ENCODE measurements at regions of chr21 and their contacts with region 1.

Region 1: DNA sequence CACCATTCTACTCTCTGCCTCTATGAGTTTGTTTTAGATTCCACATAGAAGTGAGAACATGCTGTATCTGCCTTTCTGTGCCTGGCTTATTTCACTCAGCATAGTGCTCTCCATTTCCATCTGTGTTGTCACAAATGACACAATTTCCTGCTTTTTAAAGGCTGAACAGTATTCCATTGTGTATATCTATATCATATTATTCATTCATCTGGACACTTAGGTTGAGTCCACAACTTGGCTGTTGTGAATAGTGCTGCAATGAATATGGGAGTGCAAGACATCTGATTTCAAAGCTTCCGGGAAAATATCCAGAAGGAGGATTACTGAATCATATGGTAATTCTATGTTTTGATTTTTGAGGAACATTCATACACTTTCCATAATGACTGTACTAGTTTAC is 20.1 kb upstream of the DONSON start:
- DNase-seq: no peak
- H3K4me3 ChIP-seq: no peak overlapping the region
- H3K27ac ChIP-seq: no peak overlapping the region
- H3K4me1 ChIP-seq: no peaks in the 10 kb centered on the region
- H3K27me3 ChIP-seq: no peaks in the 10 kb centered on the region
- CTCF ChIP-seq: no peak
- EP300 ChIP-seq: no peak
- RAD21 ChIP-seq: no peak

Region 2: GRCh38 chr21:33572350-33572749 is 36.2 kb before region 1 on chr21:
- CTCF ChIA-PET with region 1: interaction called, 17 read pairs
- POLR2A ChIA-PET with region 1: no interaction called
- DNase-seq: no peak
- H3K4me3 ChIP-seq: no peak overlapping the region
- H3K27ac ChIP-seq: no peak overlapping the region
- H3K4me1 ChIP-seq: no peaks in the 10 kb centered on the region; a peak in 1 of 4 replicates
- H3K27me3 ChIP-seq: no peaks in the 10 kb centered on the region
- CTCF ChIP-seq: no peak
- EP300 ChIP-seq: no peak
- RAD21 ChIP-seq: no peak

Region 3: GRCh38 chr21:33578959-33579542 is 29.5 kb before region 1 on chr21:
- CTCF ChIA-PET with region 1: interaction called, 11 read pairs
- POLR2A ChIA-PET with region 1: no interaction called
- DNase-seq: no peak
- H3K4me3 ChIP-seq: no peak overlapping the region
- H3K27ac ChIP-seq: peak overlapping the region; percentile 18 to 50; a peak in 3 of 4 replicates
- H3K4me1 ChIP-seq: peaks cover 0 to 6% of the 10 kb centered on the region in 2 experiments; a peak in 1 of 4 replicates
- H3K27me3 ChIP-seq: no peaks in the 10 kb centered on the region
- CTCF ChIP-seq: no peak
- EP300 ChIP-seq: no peak
- RAD21 ChIP-seq: no peak

Region 4: GRCh38 chr21:33588485-33589335 is 19.8 kb before region 1 on chr21 and contains the start of gene DONSON:
- CTCF ChIA-PET with region 1: interaction called, 50 read pairs
- POLR2A ChIA-PET with region 1: interaction called, 5 read pairs
- DNase-seq: peak; percentile 99
- H3K4me3 ChIP-seq: peak within 1 kb of the TSS; percentile 84 to 88
- H3K27ac ChIP-seq: peak within 1 kb of the TSS; percentile 83 to 96
- H3K4me1 ChIP-seq: peaks cover 6% of the 10 kb centered on the region in 2 experiments; a peak in 3 of 4 replicates
- H3K27me3 ChIP-seq: no peaks in the 10 kb centered on the region
- CTCF ChIP-seq: no peak
- EP300 ChIP-seq: 0 out of 4 replicates have a peak, but pooled peaks of 1 of the 2 experiments have one; percentile 5
- RAD21 ChIP-seq: no peak
- polyA plus RNA-seq, gene DONSON: 17.3 and 20.6 TPM in 2 replicates

Region 5: GRCh38 chr21:33598051-33598450 is 10.5 kb before region 1 on chr21:
- CTCF ChIA-PET with region 1: interaction called, 15 read pairs
- POLR2A ChIA-PET with region 1: interaction called, 6 read pairs
- DNase-seq: no peak
- H3K4me3 ChIP-seq: no peak overlapping the region
- H3K27ac ChIP-seq: no peak overlapping the region
- H3K4me1 ChIP-seq: no peaks in the 10 kb centered on the region
- H3K27me3 ChIP-seq: no peaks in the 10 kb centered on the region
- CTCF ChIP-seq: no peak
- EP300 ChIP-seq: no peak
- RAD21 ChIP-seq: no peak

Region 6: GRCh38 chr21:33619726-33620125 is 11.2 kb after region 1 on chr21:
- CTCF ChIA-PET with region 1: interaction called, 21 read pairs
- POLR2A ChIA-PET with region 1: no interaction called
- DNase-seq: no peak
- H3K4me3 ChIP-seq: no peak overlapping the region
- H3K27ac ChIP-seq: no peak overlapping the region
- H3K4me1 ChIP-seq: no peaks in the 10 kb centered on the region
- H3K27me3 ChIP-seq: no peaks in the 10 kb centered on the region
- CTCF ChIP-seq: no peak
- EP300 ChIP-seq: no peak
- RAD21 ChIP-seq: no peak

Region 7: GRCh38 chr21:33721081-33721480 is 112.5 kb after region 1 on chr21:
- CTCF ChIA-PET with region 1: no interaction called
- POLR2A ChIA-PET with region 1: no interaction called
- DNase-seq: no peak
- H3K4me3 ChIP-seq: no peak overlapping the region
- H3K27ac ChIP-seq: no peak overlapping the region
- H3K4me1 ChIP-seq: no peaks in the 10 kb centered on the region
- H3K27me3 ChIP-seq: no peaks in the 10 kb centered on the region
- CTCF ChIP-seq: no peak
- EP300 ChIP-seq: no peak
- RAD21 ChIP-seq: no peak

Region 8: DNA sequence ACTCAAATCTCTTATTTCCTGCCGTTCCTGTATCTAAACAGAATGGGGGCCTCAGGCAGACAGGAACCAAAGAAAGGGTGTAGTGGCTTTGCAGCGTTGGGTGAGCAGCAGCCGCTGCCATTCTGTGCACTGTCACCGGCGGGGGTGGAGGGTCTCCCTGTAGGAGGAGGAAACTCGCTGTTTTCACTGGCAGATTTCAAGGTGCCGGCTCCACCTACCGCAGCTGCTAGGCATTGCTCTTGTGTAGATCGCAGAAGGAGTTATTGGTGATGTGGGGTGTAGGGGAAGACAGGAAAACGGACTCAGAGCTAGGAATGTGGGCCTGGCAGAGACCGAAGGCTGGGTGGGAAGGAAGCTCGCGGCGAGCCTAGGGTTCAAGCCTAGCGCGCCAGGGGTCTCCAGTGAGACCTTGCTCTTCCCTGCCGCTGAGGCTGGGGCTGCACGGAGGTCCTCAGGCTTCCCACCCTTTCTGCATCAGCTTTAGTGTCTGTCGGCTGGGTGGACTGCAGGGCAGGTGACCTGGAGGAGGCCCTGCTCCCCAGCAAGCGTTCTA is 286.3 kb after region 1 on chr21:
- CTCF ChIA-PET with region 1: interaction called, 14 read pairs
- POLR2A ChIA-PET with region 1: no interaction called
- DNase-seq: peak; percentile 88
- H3K4me3 ChIP-seq: peak overlapping the region; percentile 21 to 46
- H3K27ac ChIP-seq: no peak overlapping the region; a peak in 1 of 4 replicates
- H3K4me1 ChIP-seq: peaks cover 0 to 11% of the 10 kb centered on the region in 2 experiments; a peak in 2 of 4 replicates
- H3K27me3 ChIP-seq: no peaks in the 10 kb centered on the region
- CTCF ChIP-seq: peak; percentile 67
- EP300 ChIP-seq: no peak
- RAD21 ChIP-seq: peak; percentile 90